Mammary epithelial cell (primary cell): ENCODE measurements at regions of chr13 and their contacts with region 1.

Region 1: DNA sequence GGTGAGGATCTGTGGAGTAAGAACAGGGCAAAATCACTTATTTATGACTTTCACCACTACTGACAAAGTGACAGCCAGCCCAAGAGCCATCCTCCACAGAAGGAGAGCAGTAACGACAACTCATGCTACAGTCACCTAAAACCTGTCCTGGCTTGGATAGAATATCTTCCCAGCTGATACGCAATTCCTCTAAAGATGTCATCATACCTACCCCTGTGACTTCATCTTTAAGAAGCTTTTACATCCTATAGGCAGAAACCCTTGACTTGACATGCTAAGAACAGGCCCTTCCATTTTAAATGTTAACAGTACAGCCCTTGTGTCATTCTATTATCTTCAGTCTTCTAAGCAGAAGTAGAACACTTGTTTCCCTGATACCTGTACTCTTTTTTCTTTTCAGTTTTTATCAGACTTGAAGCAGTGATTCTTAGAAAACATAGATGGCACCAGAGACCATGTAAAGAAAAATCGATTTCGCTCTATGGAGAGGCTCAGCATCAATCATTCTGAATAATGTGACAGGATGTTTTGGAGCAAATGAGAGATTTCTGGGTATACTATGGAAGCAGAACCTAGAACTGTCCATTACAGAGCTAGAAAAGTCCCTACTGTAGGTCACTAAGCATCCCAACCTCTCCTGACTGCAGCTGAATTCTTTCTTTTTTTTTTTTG is 20.1 kb downstream of the STOML3 start:
- DNase-seq: no peak
- H3K4me3 ChIP-seq: no peak overlapping the region
- H3K27ac ChIP-seq: no peak overlapping the region
- H3K4me1 ChIP-seq: no peaks in the 10 kb centered on the region
- H3K27me3 ChIP-seq: no peaks in the 10 kb centered on the region
- CTCF ChIP-seq: peak in 1 of 2 donors; percentile 3

Region 2: GRCh38 chr13:37594550-37594949 is 1376.0 kb before region 1 on chr13:
- CTCF ChIA-PET with region 1: interaction called, 22 read pairs
- dilution Hi-C with region 1: no loop called
- in situ Hi-C with region 1: no loop called
- intact Hi-C with region 1: no loop called
- DNase-seq: no peak
- H3K4me3 ChIP-seq: no peak overlapping the region
- H3K27ac ChIP-seq: no peak overlapping the region
- H3K4me1 ChIP-seq: peaks cover 8% of the 10 kb centered on the region
- H3K27me3 ChIP-seq: no peaks in the 10 kb centered on the region
- CTCF ChIP-seq: no peak

Region 3: DNA sequence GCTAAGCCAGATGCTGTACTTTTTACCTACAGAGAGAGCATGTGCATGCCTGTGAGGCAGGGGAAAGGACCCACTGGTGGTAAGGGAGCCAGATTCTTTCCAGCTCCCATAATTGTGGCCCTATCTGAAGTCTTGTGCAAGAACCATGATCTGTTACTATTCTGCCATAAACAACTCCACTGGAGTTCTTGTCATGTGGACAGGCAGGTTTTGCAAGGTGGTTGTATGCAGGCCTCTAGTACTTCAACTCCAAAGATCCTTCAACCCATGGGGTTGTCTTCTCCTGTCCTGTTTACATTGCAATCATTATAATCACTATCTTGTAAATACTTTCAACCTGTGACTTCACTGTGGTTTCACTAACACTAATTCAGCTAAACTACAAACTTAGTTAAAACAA is 53.3 kb after region 1 on chr13:
- CTCF ChIA-PET with region 1: no interaction called
- dilution Hi-C with region 1: no loop called
- in situ Hi-C with region 1: no loop called
- intact Hi-C with region 1: no loop called
- DNase-seq: peak; percentile 16
- H3K4me3 ChIP-seq: no peak overlapping the region
- H3K27ac ChIP-seq: no peak overlapping the region
- H3K4me1 ChIP-seq: no peaks in the 10 kb centered on the region
- H3K27me3 ChIP-seq: no peaks in the 10 kb centered on the region
- CTCF ChIP-seq: no peak

Region 4: GRCh38 chr13:39263033-39263432 is 292.5 kb after region 1 on chr13:
- CTCF ChIA-PET with region 1: no interaction called
- dilution Hi-C with region 1: no loop called
- in situ Hi-C with region 1: no loop called
- intact Hi-C with region 1: loop called (anchors 5 kb)
- DNase-seq: peak; percentile 37
- H3K4me3 ChIP-seq: no peak overlapping the region
- H3K27ac ChIP-seq: no peak overlapping the region
- H3K4me1 ChIP-seq: no peaks in the 10 kb centered on the region
- H3K27me3 ChIP-seq: no peaks in the 10 kb centered on the region
- CTCF ChIP-seq: peak; percentile 77 to 78